Dorsolateral prefrontal cortex (tissue), 120 donors: ENCODE measurements at regions of chr14 and their contacts with region 1.

Region 1: GRCh38 chr14:102774391-102775153 is 2.7 kb upstream of the TRAF3 start:
- DNase-seq: peak in 5 of 10 donors; percentile 58 to 81 (median 69)
- H3K4me3 ChIP-seq: peak overlapping the region in 2 of 59 donors; percentile 8 to 11
- H3K27ac ChIP-seq: peak overlapping the region in 34 of 59 donors; percentile 1 to 83 (median 55)
- H3K27me3 ChIP-seq: no peaks in the 10 kb centered on the region
- CTCF ChIP-seq: peak; percentile 59 to 84 (median 75)

Region 2: GRCh38 chr14:102524466-102525218 is 249.9 kb before region 1 on chr14:
- intact Hi-C with region 1: loop called in 1 of 2 experiments (anchors 10 kb)
- DNase-seq: peak; percentile 93 to 99 (median 97)
- H3K4me3 ChIP-seq: peak overlapping the region; percentile 46 to 87 (median 71)
- H3K27ac ChIP-seq: peak overlapping the region; percentile 13 to 94 (median 80)
- H3K27me3 ChIP-seq: no peaks in the 10 kb centered on the region
- CTCF ChIP-seq: peak; percentile 87 to 99 (median 97)

Region 3: GRCh38 chr14:102694530-102695166 is 79.9 kb before region 1 on chr14:
- intact Hi-C with region 1: loop called (anchors 5 kb)
- DNase-seq: peak in 5 of 10 donors; percentile 36 to 72 (median 55)
- H3K4me3 ChIP-seq: peak overlapping the region in 2 of 59 donors; percentile 4 to 7
- H3K27ac ChIP-seq: peak overlapping the region in 1 of 59 donors; percentile 21
- H3K27me3 ChIP-seq: no peaks in the 10 kb centered on the region
- CTCF ChIP-seq: peak; percentile 56 to 94 (median 84)

Region 4: GRCh38 chr14:102824832-102825231 is 50.3 kb after region 1 on chr14:
- intact Hi-C with region 1: loop called in 1 of 2 experiments (anchors 5 kb)
- DNase-seq: peak in 2 of 10 donors; percentile 58 to 87
- H3K4me3 ChIP-seq: no peak overlapping the region
- H3K27ac ChIP-seq: peak overlapping the region in 1 of 59 donors; percentile 40
- H3K27me3 ChIP-seq: no peaks in the 10 kb centered on the region
- CTCF ChIP-seq: peak in 8 of 56 donors; percentile 8 to 27 (median 16)

Region 5: DNA sequence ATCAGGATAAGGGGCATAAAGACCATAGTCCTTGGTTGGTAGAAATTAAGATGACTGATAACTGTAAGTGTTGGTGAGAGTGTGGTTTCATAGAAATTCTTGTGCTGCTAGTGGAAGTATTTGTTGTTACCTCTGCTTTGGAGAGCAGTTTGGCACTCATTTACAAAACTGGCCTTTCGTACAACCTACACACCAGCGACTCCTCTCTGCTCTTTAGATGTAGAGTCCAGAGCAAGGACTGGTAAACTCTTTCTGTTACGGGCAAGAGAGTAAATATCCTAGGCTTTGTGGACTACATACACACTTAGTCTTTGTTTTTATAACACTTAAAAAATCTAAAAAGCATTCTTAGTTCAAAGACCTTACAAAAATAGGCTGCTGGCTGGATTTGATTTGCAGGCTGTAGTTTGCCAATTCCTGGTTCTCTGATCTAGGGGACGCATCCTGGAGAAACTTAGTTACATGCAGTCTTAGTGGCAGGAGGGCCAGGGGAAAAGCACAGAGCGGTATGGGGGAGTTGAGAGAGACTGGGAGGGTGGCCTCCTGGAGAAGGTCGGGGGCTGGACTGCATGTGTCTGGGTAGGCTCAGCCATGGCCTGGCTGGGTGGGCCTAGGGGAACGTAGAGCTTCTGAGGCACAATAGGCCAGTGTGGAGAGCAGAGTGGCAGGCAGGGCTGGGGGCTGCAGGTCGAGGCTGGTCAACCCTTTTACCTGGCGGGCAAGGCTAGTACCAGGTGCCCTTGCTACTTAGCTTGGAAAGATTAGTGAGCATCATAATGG is 92.6 kb after region 1 on chr14:
- intact Hi-C with region 1: no loop called
- DNase-seq: no peak
- H3K4me3 ChIP-seq: no peak overlapping the region
- H3K27ac ChIP-seq: no peak overlapping the region
- H3K27me3 ChIP-seq: no peaks in the 10 kb centered on the region
- CTCF ChIP-seq: no peak

Region 6: GRCh38 chr14:102986810-102987579 is 212.4 kb after region 1 on chr14:
- intact Hi-C with region 1: loop called in 1 of 2 experiments (anchors 10 kb)
- DNase-seq: peak in 1 of 10 donors; percentile 55
- H3K4me3 ChIP-seq: peak overlapping the region in 3 of 59 donors; percentile 4 to 25 (median 17)
- H3K27ac ChIP-seq: peak overlapping the region; percentile 1 to 89 (median 77)
- H3K27me3 ChIP-seq: no peaks in the 10 kb centered on the region
- CTCF ChIP-seq: peak in 1 of 56 donors; percentile 12